ENCODE measurements at regions of chr2 and their contacts with region 1.

Region 1: DNA sequence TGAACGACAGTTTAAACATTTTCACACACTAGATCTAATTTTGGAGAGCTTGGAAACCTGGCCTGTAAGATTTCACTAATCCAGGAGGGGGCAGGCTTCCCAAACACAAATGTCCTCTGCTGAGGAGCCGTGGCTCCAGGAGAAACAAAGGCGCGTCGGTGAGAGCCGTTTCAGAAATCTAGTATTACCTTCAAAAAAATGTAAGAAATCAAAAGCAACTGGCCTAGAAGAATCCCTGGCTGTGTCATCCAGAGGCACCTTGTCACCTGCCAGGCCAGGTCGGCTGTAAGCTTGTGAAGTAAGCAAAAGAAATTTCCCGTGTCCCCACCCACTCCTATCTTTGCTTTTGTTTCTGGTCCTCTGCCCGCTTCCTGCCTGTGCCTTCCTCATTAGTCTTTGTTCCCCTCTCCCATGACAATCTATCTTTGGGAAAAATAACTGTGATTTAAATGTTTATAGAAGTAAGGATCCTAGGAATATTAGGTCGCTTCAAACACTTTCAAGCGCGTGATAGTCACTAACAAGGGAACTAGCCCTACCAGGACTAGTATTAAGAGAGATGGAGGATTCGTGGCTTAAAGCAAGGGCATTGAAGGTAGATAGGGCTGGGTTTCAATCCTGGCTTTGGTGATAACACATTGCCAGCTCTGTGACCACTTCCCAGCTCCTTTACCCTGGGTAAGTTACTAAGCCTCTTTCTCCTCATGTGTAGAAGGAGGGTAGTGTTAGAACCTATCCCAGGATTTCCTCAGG is 99.5 kb upstream of the STK39 start:
- DNase-seq: peak; percentile 82
- H3K4me3 ChIP-seq: peak overlapping the region; percentile 22 to 52 (median 42)
- H3K27ac ChIP-seq: no peak overlapping the region
- H3K4me1 ChIP-seq: peaks cover 0 to 5% (median 2%) of the 10 kb centered on the region in 4 donors
- H3K27me3 ChIP-seq: no peaks in the 10 kb centered on the region
- CTCF ChIP-seq: peak; percentile 79 to 94 (median 82)
- EP300 ChIP-seq: no peak
- POLR2A ChIP-seq: no peak

Region 2: GRCh38 chr2:168692132-168692744 is 345.3 kb after region 1 on chr2:
- intact Hi-C with region 1: loop called (anchors 5 kb)
- DNase-seq: no peak
- H3K4me3 ChIP-seq: no peak overlapping the region
- H3K27ac ChIP-seq: no peak overlapping the region
- H3K4me1 ChIP-seq: peaks cover 0 to 14% (median 2%) of the 10 kb centered on the region in 4 donors
- H3K27me3 ChIP-seq: no peaks in the 10 kb centered on the region
- CTCF ChIP-seq: no peak
- EP300 ChIP-seq: no peak
- POLR2A ChIP-seq: no peak

Region 3: GRCh38 chr2:168705534-168706470 is 358.9 kb after region 1 on chr2:
- intact Hi-C with region 1: loop called (anchors 2 kb)
- DNase-seq: no peak
- H3K4me3 ChIP-seq: no peak overlapping the region
- H3K27ac ChIP-seq: no peak overlapping the region
- H3K4me1 ChIP-seq: peaks cover 0 to 4% (median under 1%) of the 10 kb centered on the region in 4 donors
- H3K27me3 ChIP-seq: no peaks in the 10 kb centered on the region
- CTCF ChIP-seq: peak in 2 of 4 experiments; percentile 27 to 33
- EP300 ChIP-seq: no peak
- POLR2A ChIP-seq: no peak

Region 4: GRCh38 chr2:168758970-168759820 is 412.3 kb after region 1 on chr2:
- intact Hi-C with region 1: loop called (anchors 1 kb)
- DNase-seq: no peak
- H3K4me3 ChIP-seq: no peak overlapping the region
- H3K27ac ChIP-seq: no peak overlapping the region
- H3K4me1 ChIP-seq: no peaks in the 10 kb centered on the region
- H3K27me3 ChIP-seq: no peaks in the 10 kb centered on the region
- CTCF ChIP-seq: peak in 3 of 4 experiments; percentile 47 to 61 (median 53)
- EP300 ChIP-seq: no peak
- POLR2A ChIP-seq: no peak

Region 5: GRCh38 chr2:168920504-168921157 is 573.7 kb after region 1 on chr2:
- intact Hi-C with region 1: loop called (anchors 2 kb)
- DNase-seq: no peak
- H3K4me3 ChIP-seq: no peak overlapping the region
- H3K27ac ChIP-seq: no peak overlapping the region
- H3K4me1 ChIP-seq: no peaks in the 10 kb centered on the region
- H3K27me3 ChIP-seq: no peaks in the 10 kb centered on the region
- CTCF ChIP-seq: peak in 2 of 4 experiments; percentile 46 to 52
- EP300 ChIP-seq: no peak
- POLR2A ChIP-seq: no peak